ENCODE measurements at regions of chr20 and their contacts with region 1.

Region 1: GRCh38 chr20:55415567-55416142 is 589.7 kb downstream of the CBLN4 start:
- DNase-seq: peak in 1 of 42 donors; percentile 6

Region 2: DNA sequence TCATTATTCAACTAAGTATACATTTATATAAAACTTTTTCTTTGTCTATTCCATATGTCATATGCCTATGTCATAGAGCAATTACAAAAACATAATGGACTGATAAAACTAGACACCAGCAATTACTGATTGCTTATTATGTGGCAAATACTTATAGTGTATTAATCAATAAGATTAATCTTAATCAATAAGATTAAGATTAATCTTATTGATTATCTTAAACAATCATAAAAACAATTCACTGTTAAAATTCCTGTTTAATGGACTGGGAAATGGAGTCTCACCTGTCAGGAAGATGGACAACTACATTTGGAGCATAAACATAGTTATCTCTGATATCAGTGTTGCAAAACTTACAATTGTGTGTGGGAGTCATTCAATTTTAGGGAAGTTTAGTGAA is 120.6 kb before region 1 on chr20:
- intact Hi-C with region 1: no loop called
- DNase-seq: no peak

Region 3: DNA sequence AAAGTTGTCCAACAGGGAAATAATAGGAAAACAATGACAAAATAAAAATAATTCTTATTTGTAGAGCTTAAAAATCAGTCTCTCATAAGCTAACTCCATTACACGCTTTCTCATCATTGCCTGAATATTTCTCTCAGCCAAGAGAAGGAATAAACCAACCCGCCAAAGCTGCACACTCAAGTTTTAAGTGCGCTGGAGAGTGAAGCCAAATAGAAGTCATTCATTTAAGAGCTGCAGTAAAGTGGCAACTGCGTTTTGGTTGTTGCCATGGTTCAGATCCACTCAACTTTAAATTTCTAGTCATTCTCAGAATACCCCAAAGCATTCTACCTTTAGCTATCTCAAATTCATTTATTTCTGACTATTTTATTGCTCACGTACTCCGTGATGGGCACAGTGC is 359.0 kb after region 1 on chr20:
- intact Hi-C with region 1: no loop called
- DNase-seq: no peak

Region 4: DNA sequence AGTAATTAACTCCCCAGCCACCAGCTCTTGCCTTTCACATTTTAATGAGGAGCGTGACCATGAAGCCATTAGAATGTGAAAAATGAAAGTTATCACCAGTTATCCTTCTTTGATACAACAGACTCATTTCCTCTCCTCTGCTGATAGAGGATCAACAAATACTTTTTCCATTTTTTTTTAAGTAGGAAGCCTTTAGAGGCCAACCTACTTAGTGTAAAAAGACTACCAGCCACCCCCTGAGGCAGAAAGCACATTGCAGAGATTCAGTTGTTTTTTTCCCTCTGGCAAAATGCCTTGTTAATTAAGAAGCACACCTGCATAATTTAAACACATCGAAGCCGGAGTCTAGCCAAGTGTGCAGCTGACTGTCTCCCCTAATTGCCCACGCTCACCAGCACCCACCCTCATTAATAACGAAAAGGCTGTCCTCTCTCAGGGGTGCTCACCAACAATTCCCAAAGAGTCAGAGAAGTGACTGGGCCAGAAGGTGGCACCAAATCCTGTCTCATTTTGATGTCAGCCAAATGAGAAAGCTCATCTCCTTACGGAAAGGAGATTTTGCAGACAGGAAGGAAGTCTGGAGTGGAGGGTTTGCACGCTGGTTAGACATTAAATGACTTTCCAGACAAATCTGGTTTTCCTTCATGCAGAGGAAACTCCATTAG is 772.0 kb after region 1 on chr20:
- intact Hi-C with region 1: loop called (anchors 10 kb)
- DNase-seq: peak in 41 of 42 donors; percentile 8 to 70 (median 43)

Measured in head of caudate nucleus (tissue), 42 donors.